ENCODE measurements at regions of chr7 and their contacts with region 1.

Region 1: DNA sequence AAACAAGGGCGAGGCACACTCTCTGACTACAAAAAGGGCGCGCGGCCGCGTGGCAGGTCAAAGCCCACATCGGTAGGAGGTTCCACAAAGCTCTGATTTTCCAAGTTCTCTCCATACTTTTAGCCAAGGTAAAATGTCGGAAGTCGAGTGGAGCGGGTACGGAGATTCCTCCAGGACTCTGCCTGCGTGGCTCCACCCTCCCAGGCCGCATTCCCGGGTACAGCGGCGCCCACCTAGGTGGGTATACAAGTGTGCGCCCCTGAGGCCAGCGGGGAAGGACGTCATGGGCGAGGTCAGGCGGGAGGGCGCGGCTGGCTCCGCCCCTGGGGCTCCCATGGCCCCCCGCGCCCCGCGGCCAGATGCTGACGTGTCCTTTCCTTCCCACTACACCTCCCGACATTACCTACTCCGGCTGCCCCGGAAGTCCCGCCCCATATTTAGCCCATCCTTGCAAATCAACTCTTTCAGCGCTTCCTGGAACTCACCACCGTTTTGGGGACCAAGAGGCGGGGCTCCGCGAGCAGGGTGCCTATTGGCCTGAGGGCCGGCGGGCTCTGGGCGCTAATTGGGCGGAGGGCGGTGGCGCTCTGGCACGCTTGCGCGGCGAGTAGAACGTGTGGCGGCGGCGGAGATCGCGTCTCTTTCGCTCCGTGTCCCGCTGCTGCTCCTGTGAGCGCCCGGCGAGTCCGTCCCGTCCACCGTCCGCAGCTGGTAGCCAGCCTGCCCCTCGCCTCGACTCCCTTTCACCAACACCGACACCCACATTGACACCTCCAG is at the start of gene SND1:
- DNase-seq: peak; percentile 99
- H3K4me3 Mint-ChIP-seq: peak within 1 kb of the TSS; percentile 100
- H3K27ac Mint-ChIP-seq: peak within 1 kb of the TSS; percentile 98
- H3K4me1 Mint-ChIP-seq: peaks cover 49% of the 10 kb centered on the region
- H3K27me3 Mint-ChIP-seq: peaks cover 6% of the 10 kb centered on the region
- total RNA-seq, gene SND1: 281 and 292 TPM in 2 replicates

Region 2: DNA sequence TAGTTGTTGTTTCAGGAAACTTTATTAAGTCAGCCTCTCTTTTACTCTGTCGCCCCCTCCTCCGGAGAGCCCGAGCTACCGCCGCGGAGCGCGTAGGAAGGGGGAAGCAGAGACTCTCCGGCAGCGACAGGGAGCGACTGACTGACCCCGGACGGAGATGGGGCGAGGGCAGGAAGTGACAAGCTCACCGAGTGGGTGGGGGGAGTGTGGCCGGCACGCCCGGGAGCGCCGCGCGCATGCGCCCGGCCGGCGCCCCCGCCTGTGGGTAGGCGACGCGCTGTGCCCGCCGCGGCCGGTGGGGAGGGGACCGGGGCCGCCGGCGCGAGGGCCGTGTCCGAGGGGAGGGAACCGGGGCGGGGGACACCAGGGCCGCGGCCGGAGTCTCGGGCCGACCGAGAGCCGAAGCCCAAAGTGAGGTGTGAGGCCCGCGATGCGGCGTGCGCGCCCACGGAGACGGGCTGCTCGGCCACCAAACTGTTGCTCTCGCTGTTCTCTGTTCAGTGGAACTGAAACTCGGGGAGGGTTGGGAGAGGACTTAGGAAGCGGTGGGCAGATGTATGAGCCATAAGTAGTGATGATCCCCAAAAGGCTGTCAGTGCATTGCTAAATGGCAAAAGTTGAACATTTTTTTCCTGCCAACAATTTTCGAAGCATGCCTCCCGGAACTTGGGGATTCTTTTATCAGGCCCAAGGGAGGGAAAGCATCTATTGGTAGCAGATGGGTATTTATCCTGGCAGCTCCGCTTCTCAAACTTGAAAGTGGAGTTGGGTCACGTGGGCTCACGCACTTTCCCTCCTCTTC is 259.0 kb before region 1 on chr7 and contains the start of gene ZNF800:
- intact Hi-C with region 1: loop called (anchors 1 kb)
- DNase-seq: peak; percentile 86
- H3K4me3 Mint-ChIP-seq: peak within 1 kb of the TSS; percentile 95
- H3K27ac Mint-ChIP-seq: peak within 1 kb of the TSS; percentile 97
- H3K4me1 Mint-ChIP-seq: peaks cover 60% of the 10 kb centered on the region
- H3K27me3 Mint-ChIP-seq: peaks cover 6% of the 10 kb centered on the region
- total RNA-seq, gene ZNF800: 39.1 and 44.2 TPM in 2 replicates

Region 3: GRCh38 chr7:127667017-127667670 is 15.4 kb after region 1 on chr7:
- intact Hi-C with region 1: loop called (anchors 1 kb)
- DNase-seq: no peak
- H3K4me3 Mint-ChIP-seq: no peak overlapping the region
- H3K27ac Mint-ChIP-seq: peak overlapping the region; percentile 74
- H3K4me1 Mint-ChIP-seq: peaks cover 67% of the 10 kb centered on the region
- H3K27me3 Mint-ChIP-seq: no peaks in the 10 kb centered on the region

Region 4: GRCh38 chr7:127858091-127858914 is 206.6 kb after region 1 on chr7:
- intact Hi-C with region 1: loop called (anchors 5 kb)
- DNase-seq: no peak
- H3K4me3 Mint-ChIP-seq: peak overlapping the region; percentile 30
- H3K27ac Mint-ChIP-seq: peak overlapping the region; percentile 52
- H3K4me1 Mint-ChIP-seq: peaks cover 67% of the 10 kb centered on the region
- H3K27me3 Mint-ChIP-seq: peaks cover 5% of the 10 kb centered on the region

Region 5: GRCh38 chr7:128343554-128344430 is 692.0 kb after region 1 on chr7 and contains the start of gene RBM28:
- intact Hi-C with region 1: loop called (anchors 2 kb)
- DNase-seq: peak; percentile 83
- H3K4me3 Mint-ChIP-seq: peak within 1 kb of the TSS; percentile 95
- H3K27ac Mint-ChIP-seq: peak within 1 kb of the TSS; percentile 89
- H3K4me1 Mint-ChIP-seq: peaks cover 30% of the 10 kb centered on the region
- H3K27me3 Mint-ChIP-seq: peaks cover 16% of the 10 kb centered on the region
- total RNA-seq, gene RBM28: 77.0 and 80.1 TPM in 2 replicates

Region 6: DNA sequence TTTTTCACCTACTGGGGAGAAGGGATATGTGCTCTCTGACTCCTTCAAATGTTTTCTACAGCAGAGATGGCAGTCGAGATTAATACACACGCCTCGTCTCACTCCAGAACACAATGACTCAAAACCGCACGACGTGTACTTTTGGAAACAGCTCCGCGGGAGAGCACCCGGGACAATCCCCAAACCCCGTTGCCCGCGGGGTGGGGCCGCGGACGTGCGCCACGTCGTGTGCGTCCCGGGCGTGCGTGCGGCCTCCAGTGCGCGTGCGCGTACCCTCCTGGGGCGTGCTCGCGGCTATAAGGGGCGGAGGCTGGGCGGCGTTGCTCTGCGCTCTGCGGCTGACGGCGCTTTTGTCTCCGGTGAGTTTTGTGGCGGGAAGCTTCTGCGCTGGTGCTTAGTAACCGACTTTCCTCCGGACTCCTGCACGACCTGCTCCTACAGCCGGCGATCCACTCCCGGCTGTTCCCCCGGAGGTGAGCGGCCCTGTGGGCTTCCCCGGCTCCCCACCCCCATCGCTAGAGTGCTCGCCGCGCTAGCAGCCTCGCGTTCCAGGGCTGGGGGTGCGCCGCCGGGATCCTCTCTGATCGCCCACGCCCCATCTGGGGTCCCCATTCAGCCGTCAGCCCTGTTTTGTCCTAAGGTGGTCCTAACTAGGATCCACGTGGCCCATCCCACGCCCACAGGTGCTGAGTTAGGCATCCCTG is 804.0 kb after region 1 on chr7 and contains the start of gene HILPDA:
- intact Hi-C with region 1: loop called (anchors 10 kb)
- DNase-seq: peak; percentile 95
- H3K4me3 Mint-ChIP-seq: peak within 1 kb of the TSS; percentile 96
- H3K27ac Mint-ChIP-seq: peak within 1 kb of the TSS; percentile 99
- H3K4me1 Mint-ChIP-seq: peaks cover 67% of the 10 kb centered on the region
- H3K27me3 Mint-ChIP-seq: peaks cover 16% of the 10 kb centered on the region
- total RNA-seq, gene HILPDA: 53.7 and 56.9 TPM in 2 replicates

Measured in activated T-helper 1 cell treated with anti-CD3 and anti-CD28 coated beads, Interleukin-12 subunit alpha, Interleukin-12 subunit beta, Interleukin-2, Interleukin-4 antibody, amounts not matched to agents 30 ng/mL and 10 ng/mL and 1 ng/mL, durations not matched to agents 14 hours and 24 hours and 36 hours (primary cell).